ENCODE measurements at regions of chr3 and their contacts with region 1.

Region 1: GRCh38 chr3:142224482-142225072 is 808 bp downstream of the GK5 start:
- DNase-seq: no peak
- H3K4me3 Mint-ChIP-seq: peak overlapping the region; percentile 94
- H3K27ac Mint-ChIP-seq: peak overlapping the region; percentile 92
- H3K4me1 Mint-ChIP-seq: peaks cover 45% of the 10 kb centered on the region
- H3K27me3 Mint-ChIP-seq: no peaks in the 10 kb centered on the region
- CTCF ChIP-seq: no peak

Region 2: DNA sequence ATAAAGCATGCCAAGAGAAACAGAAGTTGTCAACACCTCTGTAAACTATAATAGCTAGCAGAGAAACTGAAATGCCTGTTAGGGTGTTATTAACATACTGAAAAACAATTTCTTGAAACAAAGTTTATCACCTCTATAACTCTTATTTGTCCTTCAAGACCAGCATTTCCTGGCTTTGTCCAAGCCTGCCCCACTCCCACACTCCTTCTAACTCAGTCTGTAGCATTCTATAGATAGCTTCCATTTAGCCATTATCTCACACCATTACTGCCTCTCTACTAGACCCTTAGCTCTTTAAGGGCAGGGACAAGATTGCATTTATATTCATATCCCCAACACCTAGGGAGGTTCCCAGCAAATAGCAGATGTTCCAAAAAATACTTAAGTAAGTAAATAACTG is 35.7 kb before region 1 on chr3:
- CTCF ChIA-PET with region 1: no interaction called
- intact Hi-C with region 1: no loop called
- DNase-seq: no peak
- H3K4me3 Mint-ChIP-seq: no peak overlapping the region
- H3K27ac Mint-ChIP-seq: no peak overlapping the region
- H3K4me1 Mint-ChIP-seq: no peaks in the 10 kb centered on the region
- H3K27me3 Mint-ChIP-seq: no peaks in the 10 kb centered on the region
- CTCF ChIP-seq: no peak

Region 3: DNA sequence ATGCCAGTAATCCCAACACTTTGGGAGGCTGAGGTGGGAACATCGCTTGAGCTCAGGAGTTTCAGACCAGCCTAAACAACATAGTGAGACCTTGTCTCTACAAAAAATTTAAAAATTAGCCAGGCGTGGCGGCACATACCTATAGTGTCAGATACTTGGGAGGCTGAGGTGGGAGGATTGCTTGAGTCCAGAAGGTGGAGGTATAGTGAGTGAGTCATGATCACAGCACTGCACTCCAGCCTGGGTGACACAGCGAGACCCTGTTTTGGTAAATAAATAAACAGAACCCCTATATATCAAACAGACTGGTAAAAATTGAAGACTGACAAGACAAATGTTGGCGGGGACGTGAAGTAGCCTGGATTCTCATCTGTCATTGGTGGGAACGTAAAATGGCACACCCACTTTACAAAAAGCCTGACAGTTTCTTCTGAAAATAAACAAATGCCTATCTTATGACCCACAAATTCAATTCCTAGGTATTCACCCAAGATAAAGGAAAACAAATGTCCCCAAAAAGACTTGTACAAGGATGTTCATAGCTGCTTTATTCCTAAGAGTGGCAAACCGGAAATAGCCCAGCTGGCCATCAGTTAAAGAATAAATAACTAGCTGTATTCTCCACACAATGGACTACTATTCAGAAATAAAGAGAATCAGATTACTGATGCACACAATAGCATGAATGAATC is 47.8 kb after region 1 on chr3:
- CTCF ChIA-PET with region 1: no interaction called
- intact Hi-C with region 1: loop called (anchors 2 kb)
- DNase-seq: peak; percentile 58
- H3K4me3 Mint-ChIP-seq: peak overlapping the region; percentile 8
- H3K27ac Mint-ChIP-seq: peak overlapping the region; percentile 58
- H3K4me1 Mint-ChIP-seq: peaks cover 43% of the 10 kb centered on the region
- H3K27me3 Mint-ChIP-seq: no peaks in the 10 kb centered on the region
- CTCF ChIP-seq: no peak